Gastrocnemius medialis (tissue), 4 donors: ENCODE measurements at regions of chr1 and their contacts with region 1.

Region 1: GRCh38 chr1:150629115-150629928 is at the start of gene ENSA:
- DNase-seq: peak; percentile 99
- ATAC-seq: peak; percentile 94 to 97
- H3K4me3 ChIP-seq: peak within 1 kb of the TSS; percentile 77 to 92 (median 80)
- H3K27ac ChIP-seq: peak within 1 kb of the TSS; percentile 95 to 99 (median 97)
- H3K4me1 ChIP-seq: peaks cover 17 to 25% of the 10 kb centered on the region in 2 donors
- H3K27me3 ChIP-seq: no peaks in the 10 kb centered on the region
- CTCF ChIP-seq: no peak
- POLR2A ChIP-seq: peak; percentile 95 to 96
- total RNA-seq, gene ENSA: 164 to 302 (median 219) TPM

Region 2: DNA sequence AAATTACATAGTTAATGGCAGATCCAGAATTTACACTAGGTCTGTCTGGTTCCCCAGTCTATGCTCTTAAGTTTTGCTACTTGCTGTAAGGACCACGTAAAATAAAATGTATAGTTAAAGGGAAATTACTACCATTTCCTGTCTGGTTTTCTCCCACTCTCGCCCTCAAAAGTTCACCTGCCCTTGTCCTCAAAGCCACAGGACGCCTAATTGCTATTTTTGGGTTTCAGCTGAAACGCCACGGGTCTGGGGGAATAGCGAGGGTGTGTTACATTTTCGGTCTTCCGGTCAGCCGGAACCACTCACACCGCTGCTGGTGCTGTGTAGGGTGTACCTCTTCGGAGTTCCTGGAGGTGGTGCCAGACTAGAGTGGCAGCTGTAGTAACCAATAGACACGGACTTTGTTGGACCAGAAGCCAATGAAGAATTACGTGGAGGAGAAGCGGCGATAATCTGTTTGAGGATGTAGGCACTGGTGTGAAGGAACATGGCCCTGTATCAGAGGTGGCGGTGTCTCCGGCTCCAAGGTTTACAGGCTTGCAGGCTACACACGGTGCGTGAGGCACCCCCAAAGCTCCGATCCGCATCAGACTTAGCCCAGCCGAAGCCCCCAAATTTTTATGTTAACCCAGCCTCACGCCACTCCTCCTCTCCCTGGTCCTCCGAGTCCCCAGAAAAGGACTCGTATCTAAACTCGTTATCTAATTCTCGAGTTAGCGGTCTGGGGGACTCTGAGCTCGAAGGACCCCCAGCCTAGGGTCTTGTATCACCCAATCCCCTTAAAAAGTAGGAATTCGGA is 142.2 kb before region 1 on chr1 and contains the start of gene TARS2:
- in situ Hi-C with region 1: no loop called
- intact Hi-C with region 1: loop called (anchors 5 kb)
- DNase-seq: peak; percentile 96 to 97
- ATAC-seq: peak; percentile 100
- H3K4me3 ChIP-seq: peak within 1 kb of the TSS; percentile 79 to 96 (median 88)
- H3K27ac ChIP-seq: peak within 1 kb of the TSS; percentile 86 to 94 (median 88)
- H3K4me1 ChIP-seq: peaks cover 12 to 13% of the 10 kb centered on the region in 2 donors
- H3K27me3 ChIP-seq: no peaks in the 10 kb centered on the region
- CTCF ChIP-seq: peak in 4 of 5 experiments; percentile 45 to 49 (median 48)
- POLR2A ChIP-seq: peak; percentile 35 to 43
- total RNA-seq, gene TARS2: 15.0 to 26.7 (median 18.4) TPM

Region 3: GRCh38 chr1:150529017-150529416 is 100.3 kb before region 1 on chr1:
- in situ Hi-C with region 1: no loop called
- intact Hi-C with region 1: no loop called
- DNase-seq: no peak
- ATAC-seq: peak in 1 of 2 donors; percentile 70
- H3K4me3 ChIP-seq: no peak overlapping the region
- H3K27ac ChIP-seq: peak overlapping the region in 1 of 4 donors; percentile 3
- H3K4me1 ChIP-seq: peaks cover 9 to 12% of the 10 kb centered on the region in 2 donors
- H3K27me3 ChIP-seq: no peaks in the 10 kb centered on the region
- CTCF ChIP-seq: no peak
- POLR2A ChIP-seq: no peak

Region 4: DNA sequence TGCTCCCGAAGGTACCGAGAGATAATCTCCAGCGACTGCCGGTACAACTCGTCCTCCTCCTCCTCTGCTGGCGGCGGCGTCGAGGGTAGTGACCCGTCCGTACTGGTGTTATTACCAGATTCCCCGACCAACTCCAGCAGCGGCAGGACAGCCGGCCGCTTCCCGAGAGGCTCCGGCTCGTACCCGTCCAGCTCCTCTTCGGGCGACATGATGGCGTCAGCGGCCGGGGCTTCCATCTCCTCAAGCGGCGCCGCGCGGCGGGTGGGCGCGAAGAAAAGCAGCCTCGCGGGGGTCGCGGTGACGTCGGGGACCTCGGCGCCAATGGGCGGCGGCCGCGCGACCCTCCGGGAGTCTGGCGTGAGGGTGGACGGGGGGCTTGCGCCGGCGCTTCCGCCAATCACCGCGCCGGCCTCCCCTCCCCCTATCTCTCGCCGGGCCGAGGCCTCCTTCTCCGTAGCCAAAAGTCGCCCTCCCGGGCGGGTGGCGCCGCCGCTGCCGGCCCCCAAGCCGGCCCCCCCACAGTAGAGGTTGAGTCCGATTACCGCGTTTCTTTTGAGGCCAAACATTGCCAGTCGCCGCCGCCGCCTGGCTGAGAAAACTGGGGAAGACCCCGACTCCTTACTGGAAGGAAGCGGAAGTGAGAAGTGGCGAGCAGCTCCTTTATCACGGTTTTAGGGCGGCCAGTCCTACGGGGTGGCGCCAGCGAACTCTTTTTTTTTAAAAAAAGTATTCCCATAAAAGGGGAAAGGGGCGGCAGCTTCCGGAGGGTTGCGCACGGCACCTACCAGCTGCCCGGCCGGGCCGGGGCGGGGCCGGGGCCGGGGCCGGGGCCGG is 50.1 kb before region 1 on chr1 and contains the start of gene MCL1:
- in situ Hi-C with region 1: no loop called
- intact Hi-C with region 1: loop called (anchors 1 kb)
- DNase-seq: peak; percentile 94 to 95
- ATAC-seq: peak; percentile 68 to 71
- H3K4me3 ChIP-seq: peak within 1 kb of the TSS; percentile 67 to 98 (median 84)
- H3K27ac ChIP-seq: peak within 1 kb of the TSS; percentile 100
- H3K4me1 ChIP-seq: peaks cover 21 to 25% of the 10 kb centered on the region in 2 donors
- H3K27me3 ChIP-seq: no peaks in the 10 kb centered on the region
- CTCF ChIP-seq: peak in 2 of 5 experiments; percentile 27 to 32
- POLR2A ChIP-seq: peak; percentile 98 to 99
- total RNA-seq, gene MCL1: 136 to 199 (median 176) TPM

Region 5: GRCh38 chr1:150696590-150697524 is 67.5 kb after region 1 on chr1 and contains the start of gene GOLPH3L:
- in situ Hi-C with region 1: no loop called
- intact Hi-C with region 1: loop called (anchors 2 kb)
- DNase-seq: peak; percentile 97 to 98
- ATAC-seq: peak; percentile 100
- H3K4me3 ChIP-seq: peak within 1 kb of the TSS; percentile 77 to 82 (median 80)
- H3K27ac ChIP-seq: peak within 1 kb of the TSS; percentile 76 to 89 (median 83)
- H3K4me1 ChIP-seq: peaks cover 9 to 18% of the 10 kb centered on the region in 2 donors
- H3K27me3 ChIP-seq: no peaks in the 10 kb centered on the region
- CTCF ChIP-seq: peak in 1 of 5 experiments; percentile 15
- POLR2A ChIP-seq: peak; percentile 32 to 58
- total RNA-seq, gene GOLPH3L: 9.8 to 18.6 (median 15.7) TPM

Region 6: GRCh38 chr1:150876119-150876454 is 246.8 kb after region 1 on chr1:
- in situ Hi-C with region 1: no loop called
- intact Hi-C with region 1: loop called (anchors 5 kb)
- DNase-seq: peak in 1 of 2 donors; percentile 59
- ATAC-seq: peak; percentile 35 to 53
- H3K4me3 ChIP-seq: peak overlapping the region; percentile 95 to 100 (median 99)
- H3K27ac ChIP-seq: peak overlapping the region; percentile 99 to 100 (median 100)
- H3K4me1 ChIP-seq: peaks cover 15 to 19% of the 10 kb centered on the region in 2 donors
- H3K27me3 ChIP-seq: no peaks in the 10 kb centered on the region
- CTCF ChIP-seq: no peak
- POLR2A ChIP-seq: no peak

Region 7: DNA sequence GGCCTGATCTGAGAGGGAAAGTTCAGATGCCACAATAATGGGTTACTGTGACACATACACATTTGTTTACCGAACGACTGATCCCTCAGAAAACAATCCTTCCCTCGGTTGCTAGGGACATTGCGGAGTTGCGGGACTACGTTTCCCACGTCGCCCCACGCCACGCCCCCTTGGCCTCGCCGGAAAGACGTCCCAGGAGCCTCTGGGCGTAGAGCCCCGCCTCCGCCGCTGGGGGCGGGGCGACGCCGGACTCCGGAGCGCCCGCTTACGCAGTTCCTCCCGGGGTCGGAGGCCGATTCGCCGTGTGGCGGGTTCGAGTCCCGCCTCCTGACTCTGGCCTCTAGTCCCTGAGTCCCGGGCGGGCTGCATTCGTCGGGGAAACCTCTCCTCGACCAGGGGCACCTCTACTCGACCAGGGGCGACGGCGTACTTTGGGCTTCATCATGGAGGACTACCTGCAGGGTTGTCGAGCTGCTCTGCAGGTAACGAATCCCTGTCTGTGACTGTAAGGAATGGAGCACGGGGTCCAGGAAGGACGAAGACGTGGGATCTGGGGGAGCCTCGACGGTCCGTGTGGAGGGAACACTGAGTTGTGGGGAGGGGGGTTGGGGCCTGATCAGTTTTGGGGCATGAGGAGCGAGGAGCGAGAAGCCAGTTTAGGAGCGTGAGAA is 379.0 kb after region 1 on chr1 and contains the start of gene PRUNE1:
- in situ Hi-C with region 1: no loop called
- intact Hi-C with region 1: loop called (anchors 5 kb)
- DNase-seq: peak; percentile 93 to 96
- ATAC-seq: peak; percentile 79 to 80
- H3K4me3 ChIP-seq: peak within 1 kb of the TSS; percentile 60 to 91 (median 86)
- H3K27ac ChIP-seq: peak within 1 kb of the TSS; percentile 89 to 95 (median 94)
- H3K4me1 ChIP-seq: peaks cover 54 to 62% of the 10 kb centered on the region in 2 donors
- H3K27me3 ChIP-seq: no peaks in the 10 kb centered on the region
- CTCF ChIP-seq: peak in 4 of 5 experiments; percentile 24 to 33 (median 26)
- POLR2A ChIP-seq: peak; percentile 65 to 72
- total RNA-seq, gene PRUNE1: 24.0 to 35.6 (median 29.1) TPM